CD4-positive, alpha-beta T cell (primary cell): ENCODE measurements at regions of chr1 and their contacts with region 1.

Region 1: DNA sequence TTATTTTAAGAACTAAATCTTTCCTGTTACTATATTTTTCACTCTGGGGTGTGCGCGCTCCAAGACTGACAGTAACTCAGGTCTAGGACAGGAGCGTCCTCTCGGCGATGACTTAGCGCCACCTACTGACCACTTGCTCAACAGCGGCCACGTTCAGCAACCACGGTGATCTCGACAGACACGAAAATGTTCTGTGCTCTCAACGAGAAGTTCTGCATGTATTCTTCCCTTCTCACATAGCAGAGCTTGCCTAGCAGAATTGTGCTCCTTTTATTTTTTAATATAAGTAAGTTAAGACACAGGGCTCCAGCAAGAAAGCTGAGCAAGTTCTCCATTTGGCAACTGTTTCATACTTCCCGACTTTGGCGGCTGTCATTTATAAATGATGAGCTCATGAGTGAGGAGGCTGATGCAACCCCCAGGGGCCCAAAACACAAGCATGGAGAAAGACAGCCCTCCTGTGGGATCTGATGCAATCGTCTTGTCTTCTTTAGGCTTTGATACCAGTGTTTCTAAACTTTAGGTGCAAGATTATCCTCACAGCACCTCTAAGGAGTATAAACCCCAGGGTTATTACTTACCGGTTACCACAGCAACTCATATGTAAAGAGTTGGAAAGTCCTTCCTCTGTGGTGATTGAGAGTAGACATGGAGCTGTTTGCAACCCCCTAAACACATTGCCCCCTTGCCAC is 92.6 kb downstream of the HHIPL2 start:
- DNase-seq: peak; percentile 72 to 92 (median 82)
- ATAC-seq: peak; percentile 100
- H3K4me3 ChIP-seq: no peak overlapping the region
- H3K4me3 Mint-ChIP-seq: peak overlapping the region; percentile 4
- H3K27ac ChIP-seq: no peak overlapping the region
- H3K27ac Mint-ChIP-seq: no peak overlapping the region
- H3K4me1 ChIP-seq: peaks cover 14% of the 10 kb centered on the region
- H3K4me1 Mint-ChIP-seq: peaks cover 17% of the 10 kb centered on the region
- H3K27me3 ChIP-seq: no peaks in the 10 kb centered on the region
- H3K27me3 Mint-ChIP-seq: no peaks in the 10 kb centered on the region
- CTCF ChIP-seq: peak; percentile 93

Region 2: DNA sequence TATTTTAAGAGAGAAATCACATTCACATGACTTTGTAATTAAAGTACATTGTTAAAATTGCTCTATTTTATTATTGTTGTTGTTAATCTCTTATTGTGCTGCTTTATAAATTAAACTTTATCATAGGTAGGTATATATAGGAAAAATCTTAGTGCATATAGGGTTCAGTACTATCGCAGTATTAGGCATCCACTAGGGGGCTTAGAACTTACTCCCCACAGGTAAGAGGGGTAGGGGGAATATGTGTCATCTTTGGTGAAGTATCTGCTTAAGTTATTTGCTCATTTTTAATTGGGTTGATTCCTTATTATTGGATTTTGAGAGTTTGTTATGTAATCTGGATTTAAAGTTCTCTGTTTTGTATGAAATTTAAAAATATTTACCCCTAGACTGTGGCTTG is 1098.6 kb before region 1 on chr1:
- CTCF ChIA-PET with region 1: no interaction called
- POLR2A ChIA-PET with region 1: no interaction called
- intact Hi-C with region 1: loop called in 1 of 2 experiments (anchors 10 kb)
- DNase-seq: no peak
- ATAC-seq: no peak
- H3K4me3 ChIP-seq: no peak overlapping the region
- H3K4me3 Mint-ChIP-seq: no peak overlapping the region
- H3K27ac ChIP-seq: no peak overlapping the region
- H3K27ac Mint-ChIP-seq: no peak overlapping the region
- H3K4me1 ChIP-seq: no peaks in the 10 kb centered on the region
- H3K4me1 Mint-ChIP-seq: no peaks in the 10 kb centered on the region
- H3K27me3 ChIP-seq: no peaks in the 10 kb centered on the region
- H3K27me3 Mint-ChIP-seq: no peaks in the 10 kb centered on the region
- CTCF ChIP-seq: no peak

Region 3: GRCh38 chr1:221543529-221544120 is 911.7 kb before region 1 on chr1:
- CTCF ChIA-PET with region 1: no interaction called
- POLR2A ChIA-PET with region 1: no interaction called
- intact Hi-C with region 1: loop called in 1 of 2 experiments (anchors 2 kb)
- DNase-seq: peak in 2 of 14 experiments; percentile 19 to 21
- ATAC-seq: no peak
- H3K4me3 ChIP-seq: no peak overlapping the region
- H3K4me3 Mint-ChIP-seq: no peak overlapping the region
- H3K27ac ChIP-seq: no peak overlapping the region
- H3K27ac Mint-ChIP-seq: no peak overlapping the region
- H3K4me1 ChIP-seq: no peaks in the 10 kb centered on the region
- H3K4me1 Mint-ChIP-seq: no peaks in the 10 kb centered on the region
- H3K27me3 ChIP-seq: no peaks in the 10 kb centered on the region
- H3K27me3 Mint-ChIP-seq: peaks cover 9% of the 10 kb centered on the region
- CTCF ChIP-seq: no peak

Region 4: DNA sequence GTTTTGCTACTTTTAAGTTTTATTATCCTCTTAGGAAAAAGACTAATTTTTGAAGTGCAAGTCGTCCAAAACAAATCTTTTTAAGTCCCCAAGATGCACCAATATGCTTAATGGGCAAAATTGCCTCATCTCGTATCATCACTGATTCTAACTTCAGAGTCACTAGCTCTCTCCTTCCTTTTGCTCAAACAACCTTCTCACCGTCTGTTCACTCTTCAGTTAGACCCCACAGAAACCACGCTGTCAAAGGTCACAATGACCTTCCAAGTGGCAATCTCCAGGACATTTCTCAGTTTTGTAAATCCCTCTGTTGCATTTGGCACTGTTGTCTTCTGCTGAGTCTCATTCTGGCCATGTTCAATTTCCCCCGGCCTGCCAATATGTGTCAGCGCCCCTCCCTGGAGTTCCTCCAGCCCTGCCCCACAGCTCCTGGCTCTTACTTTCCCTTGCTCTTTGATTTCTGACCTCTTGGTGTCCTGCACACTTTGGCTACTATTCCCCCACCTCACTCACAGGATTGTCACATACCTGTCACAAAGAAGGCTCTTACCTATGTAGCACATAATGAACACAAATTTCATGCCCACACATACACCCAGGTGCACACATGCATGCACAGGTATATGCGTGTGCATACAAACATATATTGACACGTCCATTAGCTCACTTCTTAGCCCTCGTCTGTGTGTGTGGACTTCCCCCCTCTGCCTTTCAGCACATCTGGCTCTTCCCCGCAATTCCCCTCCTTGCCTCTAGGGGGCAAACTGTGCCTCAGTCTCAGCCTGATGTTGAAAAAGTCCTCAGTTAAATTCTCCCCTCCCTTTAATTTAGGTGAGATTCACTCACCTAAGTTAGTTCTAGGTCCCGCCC is 359.5 kb before region 1 on chr1:
- CTCF ChIA-PET with region 1: interaction called, 10 read pairs
- POLR2A ChIA-PET with region 1: interaction called, 3 read pairs
- intact Hi-C with region 1: loop called (anchors 1 kb)
- DNase-seq: peak; percentile 36 to 79 (median 56)
- ATAC-seq: peak; percentile 65
- H3K4me3 ChIP-seq: no peak overlapping the region
- H3K4me3 Mint-ChIP-seq: no peak overlapping the region
- H3K27ac ChIP-seq: no peak overlapping the region
- H3K27ac Mint-ChIP-seq: no peak overlapping the region
- H3K4me1 ChIP-seq: peaks cover 3% of the 10 kb centered on the region
- H3K4me1 Mint-ChIP-seq: no peaks in the 10 kb centered on the region
- H3K27me3 ChIP-seq: no peaks in the 10 kb centered on the region
- H3K27me3 Mint-ChIP-seq: no peaks in the 10 kb centered on the region
- CTCF ChIP-seq: peak; percentile 86

Region 5: GRCh38 chr1:222441066-222441465 is 14.3 kb before region 1 on chr1:
- CTCF ChIA-PET with region 1: interaction called, 17 read pairs
- POLR2A ChIA-PET with region 1: no interaction called
- intact Hi-C with region 1: no loop called
- DNase-seq: no peak
- ATAC-seq: no peak
- H3K4me3 ChIP-seq: no peak overlapping the region
- H3K4me3 Mint-ChIP-seq: no peak overlapping the region
- H3K27ac ChIP-seq: no peak overlapping the region
- H3K27ac Mint-ChIP-seq: no peak overlapping the region
- H3K4me1 ChIP-seq: peaks cover 10% of the 10 kb centered on the region
- H3K4me1 Mint-ChIP-seq: peaks cover 38% of the 10 kb centered on the region
- H3K27me3 ChIP-seq: no peaks in the 10 kb centered on the region
- H3K27me3 Mint-ChIP-seq: no peaks in the 10 kb centered on the region
- CTCF ChIP-seq: no peak